PC-3 (cell line): ENCODE measurements at regions of chr9 and their contacts with region 1.

Region 1: DNA sequence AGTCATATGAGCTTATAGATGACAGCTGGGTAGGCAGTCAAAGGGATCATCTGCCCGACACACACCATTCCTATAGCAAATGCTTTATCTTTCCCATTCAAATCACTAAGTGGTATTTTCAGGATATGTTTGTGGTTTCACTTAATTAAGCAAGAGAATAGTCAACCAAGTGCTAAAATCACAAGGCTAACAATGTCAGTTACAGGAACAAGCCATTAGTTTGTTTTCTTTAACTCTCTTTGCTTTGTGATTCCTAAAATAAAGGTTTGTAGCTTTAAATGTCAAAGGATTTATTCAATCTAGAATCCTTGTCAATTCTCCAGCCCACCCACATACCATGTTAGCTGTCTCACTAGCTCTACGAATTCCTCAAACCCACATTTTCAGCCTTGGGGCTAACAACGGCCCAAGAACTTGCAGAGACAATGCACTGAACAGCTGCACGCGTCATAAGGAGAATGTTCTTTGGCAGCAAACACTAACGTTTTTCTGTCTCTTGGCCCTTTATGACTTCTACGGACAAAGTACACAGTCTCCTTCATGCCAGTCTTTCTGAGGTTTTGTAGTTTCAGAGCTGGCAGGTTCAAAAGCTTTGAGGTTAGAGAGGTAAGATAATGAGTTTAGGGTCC is 56.6 kb downstream of the ELAVL2 start:
- DNase-seq: peak; percentile 93
- ATAC-seq: peak; percentile 85
- H3K4me3 ChIP-seq: peak overlapping the region; percentile 16; the same call in 1 of the 2 replicates
- H3K27ac ChIP-seq: peak overlapping the region; percentile 65
- H3K4me1 ChIP-seq: peaks cover 50% of the 10 kb centered on the region
- H3K27me3 ChIP-seq: no peaks in the 10 kb centered on the region
- CTCF ChIP-seq: no peak

Region 2: DNA sequence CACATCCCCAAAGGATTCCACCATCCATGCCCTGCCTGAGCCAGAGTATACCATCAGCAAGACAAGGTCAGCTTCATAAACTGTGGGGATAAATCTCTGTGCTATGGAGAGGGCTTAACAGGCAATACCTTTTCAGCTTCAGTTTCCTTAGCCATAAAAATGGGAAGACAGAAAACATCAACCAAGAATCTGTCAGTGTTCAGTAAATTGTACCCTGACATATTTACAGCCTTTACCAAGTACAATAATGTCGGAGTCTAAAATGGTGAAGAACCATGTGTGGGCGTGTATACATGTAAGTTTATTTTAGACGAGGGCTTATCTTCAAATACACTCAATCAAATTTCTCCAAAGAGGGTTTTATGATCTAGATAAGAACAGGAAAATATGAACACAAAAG is 38.1 kb before region 1 on chr9:
- CTCF ChIA-PET with region 1: interaction called, 14 read pairs
- POLR2A ChIA-PET with region 1: no interaction called
- intact Hi-C with region 1: no loop called
- DNase-seq: no peak
- ATAC-seq: no peak
- H3K4me3 ChIP-seq: no peak overlapping the region
- H3K27ac ChIP-seq: no peak overlapping the region
- H3K4me1 ChIP-seq: peaks cover 18% of the 10 kb centered on the region
- H3K27me3 ChIP-seq: no peaks in the 10 kb centered on the region
- CTCF ChIP-seq: no peak